CD8-positive, alpha-beta T cell (primary cell): ENCODE measurements at regions of chr9 and their contacts with region 1.

Region 1: GRCh38 chr9:112887381-112887780 is 3.3 kb downstream of the SLC46A2 start:
- DNase-seq: peak in 1 of 9 experiments; percentile 11
- ATAC-seq: no peak
- H3K4me3 ChIP-seq: no peak overlapping the region
- H3K4me3 Mint-ChIP-seq: no peak overlapping the region
- H3K27ac ChIP-seq: no peak overlapping the region
- H3K27ac Mint-ChIP-seq: no peak overlapping the region
- H3K4me1 ChIP-seq: no peaks in the 10 kb centered on the region
- H3K4me1 Mint-ChIP-seq: no peaks in the 10 kb centered on the region
- H3K27me3 ChIP-seq: peaks cover 0 to 7% of the 10 kb centered on the region in 2 experiments
- H3K27me3 Mint-ChIP-seq: peaks cover 24% of the 10 kb centered on the region
- CTCF ChIP-seq: no peak

Region 2: GRCh38 chr9:112873773-112874405 is 13.5 kb before region 1 on chr9:
- CTCF ChIA-PET with region 1: no interaction called
- POLR2A ChIA-PET with region 1: no interaction called
- intact Hi-C with region 1: no loop called
- DNase-seq: no peak
- ATAC-seq: no peak
- H3K4me3 ChIP-seq: no peak overlapping the region
- H3K4me3 Mint-ChIP-seq: no peak overlapping the region
- H3K27ac ChIP-seq: no peak overlapping the region
- H3K27ac Mint-ChIP-seq: no peak overlapping the region
- H3K4me1 ChIP-seq: no peaks in the 10 kb centered on the region
- H3K4me1 Mint-ChIP-seq: no peaks in the 10 kb centered on the region
- H3K27me3 ChIP-seq: no peaks in the 10 kb centered on the region
- H3K27me3 Mint-ChIP-seq: no peaks in the 10 kb centered on the region
- CTCF ChIP-seq: no peak

Region 3: GRCh38 chr9:112898872-112899311 is 11.5 kb after region 1 on chr9:
- CTCF ChIA-PET with region 1: interaction called, 8 read pairs
- POLR2A ChIA-PET with region 1: no interaction called
- intact Hi-C with region 1: loop called in 1 of 2 experiments (anchors 1 kb)
- DNase-seq: no peak
- ATAC-seq: no peak
- H3K4me3 ChIP-seq: no peak overlapping the region
- H3K4me3 Mint-ChIP-seq: no peak overlapping the region
- H3K27ac ChIP-seq: no peak overlapping the region
- H3K27ac Mint-ChIP-seq: no peak overlapping the region
- H3K4me1 ChIP-seq: no peaks in the 10 kb centered on the region
- H3K4me1 Mint-ChIP-seq: no peaks in the 10 kb centered on the region
- H3K27me3 ChIP-seq: peaks cover 0 to 5% of the 10 kb centered on the region in 2 experiments
- H3K27me3 Mint-ChIP-seq: peaks cover 27% of the 10 kb centered on the region
- CTCF ChIP-seq: no peak

Region 4: DNA sequence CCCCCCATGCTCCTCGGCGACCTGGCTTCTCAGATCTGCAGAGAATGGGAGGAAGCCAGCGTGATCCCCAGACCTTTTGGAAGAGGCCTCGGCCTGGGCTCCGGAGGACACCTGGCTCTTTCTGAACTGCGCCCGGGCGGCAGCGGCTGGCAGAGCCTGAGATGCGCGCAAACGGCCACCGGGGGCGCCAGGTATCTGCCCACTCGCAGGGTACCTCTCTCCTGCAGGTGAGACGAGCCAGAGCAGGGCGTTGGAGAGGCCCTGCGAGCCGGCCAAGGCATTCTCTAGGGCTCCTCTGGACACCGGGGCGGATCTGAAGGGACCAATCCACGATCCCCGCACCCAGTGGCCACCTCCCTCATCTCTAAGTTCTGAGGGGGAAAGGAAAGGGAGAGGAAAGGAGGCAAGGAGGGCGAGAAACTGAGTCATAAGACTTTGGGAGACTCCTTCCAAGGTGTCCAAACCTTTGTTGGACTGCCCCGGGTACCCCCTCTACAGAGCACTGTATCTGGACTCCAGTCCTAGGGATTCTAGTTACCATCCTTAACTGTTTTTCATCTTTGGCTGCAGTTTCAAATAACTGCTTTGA is 58.3 kb after region 1 on chr9:
- CTCF ChIA-PET with region 1: no interaction called
- POLR2A ChIA-PET with region 1: no interaction called
- intact Hi-C with region 1: no loop called
- DNase-seq: no peak
- ATAC-seq: no peak
- H3K4me3 ChIP-seq: no peak overlapping the region
- H3K4me3 Mint-ChIP-seq: no peak overlapping the region
- H3K27ac ChIP-seq: no peak overlapping the region
- H3K27ac Mint-ChIP-seq: no peak overlapping the region
- H3K4me1 ChIP-seq: no peaks in the 10 kb centered on the region
- H3K4me1 Mint-ChIP-seq: no peaks in the 10 kb centered on the region
- H3K27me3 ChIP-seq: no peaks in the 10 kb centered on the region
- H3K27me3 Mint-ChIP-seq: peaks cover 34% of the 10 kb centered on the region
- CTCF ChIP-seq: no peak